ENCODE measurements at regions of chr22 and their contacts with region 1.

Region 1: GRCh38 chr22:40128989-40129388 is 48.7 kb upstream of the TNRC6B start:
- DNase-seq: no peak
- ATAC-seq: peak; percentile 34

Region 2: GRCh38 chr22:40147388-40148176 is 18.6 kb after region 1 on chr22:
- intact Hi-C with region 1: loop called in 1 of 2 experiments (anchors 2 kb)
- DNase-seq: no peak
- ATAC-seq: peak; percentile 94

Region 3: DNA sequence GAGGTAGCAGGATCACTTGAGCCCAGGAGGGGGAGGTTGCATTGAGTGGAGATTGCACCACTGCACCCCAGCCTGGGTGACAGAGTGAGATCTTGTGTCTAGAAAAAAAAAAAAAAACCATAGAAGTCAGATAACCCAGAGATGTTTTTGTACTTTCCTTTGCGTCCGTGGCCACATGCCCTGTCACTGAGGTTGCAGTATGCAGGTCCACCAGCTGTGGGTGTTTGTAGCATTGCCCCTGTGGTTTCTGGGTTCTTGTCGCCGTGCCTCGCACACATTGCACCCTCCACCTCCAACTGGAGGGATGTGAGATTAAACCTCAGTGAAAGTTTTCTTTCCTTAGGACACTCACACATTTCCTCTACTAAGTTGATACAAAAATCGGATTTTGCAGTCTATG is 119.0 kb after region 1 on chr22:
- intact Hi-C with region 1: no loop called
- DNase-seq: no peak
- ATAC-seq: no peak

Measured in left colon (tissue), 2 donors.